Heart left ventricle (tissue), 16 donors: ENCODE measurements at regions of chr2 and their contacts with region 1.

Region 1: GRCh38 chr2:35410431-35411061 is 945.0 kb upstream of the CRIM1 start:
- DNase-seq: peak; percentile 21 to 67 (median 29)
- ATAC-seq: no peak
- H3K4me3 ChIP-seq: no peak overlapping the region
- H3K27ac ChIP-seq: no peak overlapping the region
- H3K4me1 ChIP-seq: no peaks in the 10 kb centered on the region
- H3K27me3 ChIP-seq: no peaks in the 10 kb centered on the region
- CTCF ChIP-seq: peak; percentile 72 to 93 (median 86)
- POLR2A ChIP-seq: no peak

Region 2: GRCh38 chr2:33673937-33674336 is 1736.6 kb before region 1 on chr2:
- intact Hi-C with region 1: loop called in 8 of 10 experiments (anchors 5 to 10 kb)
- DNase-seq: no peak
- ATAC-seq: no peak
- H3K4me3 ChIP-seq: no peak overlapping the region
- H3K27ac ChIP-seq: no peak overlapping the region
- H3K4me1 ChIP-seq: no peaks in the 10 kb centered on the region
- H3K27me3 ChIP-seq: no peaks in the 10 kb centered on the region
- CTCF ChIP-seq: peak; percentile 13 to 64 (median 52)
- POLR2A ChIP-seq: no peak

Region 3: DNA sequence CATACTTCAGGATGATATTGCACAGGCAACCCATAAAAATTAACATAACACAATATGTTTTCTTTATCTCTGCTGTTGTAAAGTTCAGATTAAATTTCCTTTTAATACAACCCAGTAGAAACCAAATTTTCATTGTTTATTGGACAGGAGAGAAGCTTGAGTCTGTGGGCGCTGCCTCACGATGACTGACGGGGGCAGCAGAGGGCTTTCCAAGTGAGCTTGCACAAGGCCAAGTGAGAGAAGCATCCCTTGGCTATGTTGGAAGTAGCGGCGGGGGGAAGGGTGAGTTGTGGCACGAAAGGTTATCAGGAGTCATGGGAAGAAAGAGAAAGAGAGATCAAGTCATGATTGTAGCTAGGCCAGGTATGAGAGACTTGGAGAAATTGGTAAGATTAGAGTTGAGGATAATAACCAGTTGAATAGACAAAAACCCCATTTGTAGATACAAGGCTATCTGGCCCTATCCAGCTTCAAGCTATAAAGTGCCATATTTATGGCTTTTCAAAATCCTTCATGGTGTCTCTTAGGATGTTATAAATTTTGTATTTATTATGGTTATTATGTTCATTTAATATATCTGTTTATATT is 1397.7 kb before region 1 on chr2:
- intact Hi-C with region 1: loop called in 5 of 10 experiments (anchors 5 to 10 kb)
- DNase-seq: peak; percentile 26 to 64 (median 48)
- ATAC-seq: peak in 3 of 4 donors; percentile 72 to 84 (median 78)
- H3K4me3 ChIP-seq: no peak overlapping the region
- H3K27ac ChIP-seq: no peak overlapping the region
- H3K4me1 ChIP-seq: no peaks in the 10 kb centered on the region
- H3K27me3 ChIP-seq: no peaks in the 10 kb centered on the region
- CTCF ChIP-seq: peak; percentile 34 to 73 (median 60)
- POLR2A ChIP-seq: no peak

Region 4: DNA sequence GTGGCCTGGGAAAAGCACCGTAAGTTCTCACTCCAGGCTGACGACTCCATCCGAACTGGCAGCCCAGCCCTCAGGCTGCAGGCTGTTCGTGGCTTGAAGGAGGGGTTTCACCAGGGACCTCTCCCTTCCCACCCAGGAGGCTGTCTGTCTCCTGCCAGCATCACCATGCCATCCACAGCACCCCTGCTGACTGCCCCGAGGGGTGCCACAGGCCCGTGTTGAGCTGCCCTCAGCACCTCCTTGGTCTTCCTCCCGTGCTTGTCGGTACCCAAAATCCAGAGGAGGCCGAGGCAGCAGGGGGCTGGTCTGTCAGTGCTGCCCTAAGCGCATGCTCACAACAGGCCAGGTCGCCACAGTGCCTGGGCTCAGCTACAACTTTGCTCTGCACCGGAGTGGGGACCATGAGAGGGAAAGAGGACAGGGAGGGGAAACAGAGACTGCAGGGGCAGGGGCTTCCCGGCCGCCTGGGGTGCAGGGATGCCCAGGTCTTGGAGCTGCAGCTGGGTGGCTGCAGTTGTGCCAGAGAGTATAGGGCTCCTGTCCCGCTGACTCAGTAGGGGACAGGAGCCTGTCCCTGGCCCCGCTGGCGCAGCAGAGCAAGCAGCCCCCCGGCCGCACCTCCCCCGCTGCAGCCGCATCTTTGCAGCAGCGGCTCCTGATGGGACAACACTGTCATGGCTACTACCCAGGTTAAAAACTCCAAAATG is 18.7 kb before region 1 on chr2:
- intact Hi-C with region 1: no loop called
- DNase-seq: no peak
- ATAC-seq: no peak
- H3K4me3 ChIP-seq: no peak overlapping the region
- H3K27ac ChIP-seq: no peak overlapping the region
- H3K4me1 ChIP-seq: no peaks in the 10 kb centered on the region
- H3K27me3 ChIP-seq: no peaks in the 10 kb centered on the region
- CTCF ChIP-seq: no peak
- POLR2A ChIP-seq: no peak